ENCODE measurements at regions of chr7 and their contacts with region 1.

Region 1: GRCh38 chr7:27784393-27785053 is 44.6 kb downstream of the TAX1BP1 start:
- DNase-seq: peak; percentile 18 to 37
- H3K4me3 ChIP-seq: no peak overlapping the region
- H3K4me1 ChIP-seq: peaks cover 7% of the 10 kb centered on the region
- H3K27me3 ChIP-seq: no peaks in the 10 kb centered on the region

Region 2: GRCh38 chr7:27961255-27961654 is 176.7 kb after region 1 on chr7:
- in situ Hi-C with region 1: no loop called
- DNase-seq: no peak
- H3K4me3 ChIP-seq: no peak overlapping the region
- H3K4me1 ChIP-seq: no peaks in the 10 kb centered on the region
- H3K27me3 ChIP-seq: no peaks in the 10 kb centered on the region

Region 3: GRCh38 chr7:28020302-28020940 is 235.9 kb after region 1 on chr7:
- in situ Hi-C with region 1: loop called (anchors 25 kb)
- DNase-seq: peak; percentile 77 to 85
- H3K4me3 ChIP-seq: no peak overlapping the region
- H3K4me1 ChIP-seq: peaks cover 3% of the 10 kb centered on the region; the same call in 1 of the 2 replicates
- H3K27me3 ChIP-seq: no peaks in the 10 kb centered on the region

Measured in HAP-1 (cell line).